BJ (cell line): ENCODE measurements at regions of chr7 and their contacts with region 1.

Region 1: DNA sequence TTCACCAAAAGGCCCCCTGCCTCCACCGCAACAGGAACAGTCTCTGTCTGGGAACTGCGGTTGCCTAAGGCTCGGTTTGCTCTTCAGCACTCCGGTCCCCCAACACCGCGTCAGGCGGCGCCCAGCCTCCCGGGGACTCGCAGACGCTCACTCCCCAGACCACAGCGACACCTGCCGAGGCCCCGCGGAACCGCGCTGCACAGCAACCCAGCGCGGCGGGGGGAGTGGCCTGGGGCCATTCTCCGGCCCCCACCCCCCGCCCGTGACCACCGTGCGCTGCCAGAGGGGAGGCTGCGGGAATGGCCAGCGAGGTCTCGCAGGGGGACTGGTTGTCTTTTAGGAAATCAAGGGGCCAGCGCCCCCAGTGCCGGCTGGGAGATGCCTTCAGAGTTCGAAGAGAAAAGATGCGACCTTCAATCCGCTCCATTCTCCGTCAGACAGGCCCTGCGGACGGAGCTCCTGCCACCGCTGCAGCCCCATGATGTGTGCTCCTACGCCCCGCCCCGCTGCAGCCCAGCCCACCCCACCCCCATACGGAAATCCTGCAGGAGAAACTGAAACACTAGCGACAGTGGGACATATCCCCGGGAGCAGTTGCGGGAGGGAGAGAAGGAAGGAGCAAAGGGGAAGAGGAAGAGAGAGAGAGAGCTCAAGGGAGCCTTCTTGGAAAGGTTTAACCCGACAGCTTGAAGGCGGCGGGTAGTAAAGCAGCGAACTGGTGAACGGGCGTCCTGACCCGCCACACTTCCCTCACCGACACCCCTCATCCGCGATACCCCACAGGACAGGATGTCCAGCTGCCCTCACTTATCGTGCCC is 137.4 kb upstream of the CDCA7L start:
- DNase-seq: peak; percentile 19
- H3K4me3 ChIP-seq: peak overlapping the region; percentile 60
- H3K27me3 ChIP-seq: no peaks in the 10 kb centered on the region
- CTCF ChIP-seq: peak; percentile 88

Region 2: DNA sequence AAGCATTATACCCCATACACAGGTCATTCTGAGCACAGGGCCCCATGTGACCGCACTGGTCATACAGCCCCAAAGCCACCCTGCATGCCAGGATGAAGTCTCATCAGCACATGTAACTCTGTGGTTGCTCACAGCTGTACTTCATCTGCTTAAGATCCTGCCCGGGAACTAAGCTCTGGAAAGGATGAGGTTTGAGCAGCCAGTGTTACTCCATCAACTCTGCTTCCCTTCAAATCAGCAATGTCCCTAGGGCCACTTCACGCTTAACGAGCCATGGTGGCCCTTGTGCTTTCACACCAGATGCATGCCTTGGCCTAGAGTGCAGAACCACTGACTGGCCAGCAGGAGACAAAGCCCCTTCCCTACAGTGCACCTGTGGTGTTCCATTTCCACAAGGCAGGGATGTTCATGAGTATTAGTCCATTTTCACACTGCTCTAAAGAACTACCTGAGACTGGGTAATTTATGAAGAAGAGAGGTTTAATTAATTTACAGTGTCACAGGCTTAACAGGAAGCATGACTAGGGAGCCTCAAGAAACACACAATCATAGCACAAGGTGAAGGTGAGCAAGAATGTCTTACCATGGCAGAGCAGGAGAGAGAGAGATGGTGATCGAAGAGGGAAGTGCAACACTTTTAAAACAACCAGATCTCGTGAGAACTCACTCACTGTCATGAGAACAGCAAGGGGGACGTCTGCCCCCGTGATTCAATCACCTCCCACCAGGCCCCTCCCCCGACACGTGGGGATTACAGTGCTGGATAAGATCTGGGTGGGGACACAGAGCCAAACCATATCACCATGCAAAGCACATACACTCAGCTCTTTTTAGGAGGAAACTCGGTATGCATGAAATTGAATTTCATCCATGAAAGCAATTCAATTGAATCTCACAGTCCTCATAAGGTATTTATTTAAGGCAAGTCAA is 11.6 kb after region 1 on chr7:
- CTCF ChIA-PET with region 1: interaction called, 25 read pairs
- POLR2A ChIA-PET with region 1: interaction called, 6 read pairs
- DNase-seq: peak; percentile 9
- H3K4me3 ChIP-seq: no peak overlapping the region
- H3K27me3 ChIP-seq: peaks cover 2% of the 10 kb centered on the region
- CTCF ChIP-seq: no peak

Region 3: DNA sequence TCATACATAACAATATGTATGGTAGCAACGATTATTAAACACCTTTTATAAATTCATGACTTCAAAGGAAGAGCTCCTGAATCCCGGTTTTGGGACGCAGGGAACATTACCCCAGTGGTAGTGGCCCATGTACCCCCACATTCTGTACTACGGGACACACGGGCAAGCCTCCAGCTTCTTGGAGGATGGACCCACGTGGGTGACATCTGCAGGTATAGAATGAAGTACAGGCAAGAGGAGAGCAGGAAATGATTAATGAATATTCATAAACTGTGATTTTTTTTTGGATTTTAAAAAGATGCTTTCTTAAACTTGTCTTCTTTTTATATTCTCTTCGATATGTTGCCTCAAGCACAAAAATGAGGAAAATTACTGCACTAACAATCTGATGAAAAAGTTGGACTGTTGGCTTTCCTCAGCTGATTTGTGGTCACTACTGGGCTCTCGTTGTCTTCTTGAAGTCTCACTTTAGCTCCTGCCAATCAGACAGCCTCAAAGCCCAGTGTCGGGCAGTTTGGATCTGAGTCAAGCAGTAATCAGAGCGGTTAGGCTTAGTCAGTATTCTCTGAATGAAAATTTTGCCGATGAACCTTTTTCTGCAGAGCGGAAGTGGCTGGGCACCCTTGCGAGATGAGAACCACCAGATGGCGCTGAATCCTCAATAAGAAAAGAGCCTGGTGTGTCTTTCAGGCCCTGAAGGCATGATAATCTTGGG is 20.3 kb after region 1 on chr7:
- CTCF ChIA-PET with region 1: interaction called, 20 read pairs
- POLR2A ChIA-PET with region 1: no interaction called
- DNase-seq: peak; percentile 2
- H3K4me3 ChIP-seq: no peak overlapping the region
- H3K27me3 ChIP-seq: peaks cover 4% of the 10 kb centered on the region; the same call in 1 of the 2 replicates
- CTCF ChIP-seq: peak; percentile 82